ENCODE measurements at regions of chr10 and their contacts with region 1.

Region 1: DNA sequence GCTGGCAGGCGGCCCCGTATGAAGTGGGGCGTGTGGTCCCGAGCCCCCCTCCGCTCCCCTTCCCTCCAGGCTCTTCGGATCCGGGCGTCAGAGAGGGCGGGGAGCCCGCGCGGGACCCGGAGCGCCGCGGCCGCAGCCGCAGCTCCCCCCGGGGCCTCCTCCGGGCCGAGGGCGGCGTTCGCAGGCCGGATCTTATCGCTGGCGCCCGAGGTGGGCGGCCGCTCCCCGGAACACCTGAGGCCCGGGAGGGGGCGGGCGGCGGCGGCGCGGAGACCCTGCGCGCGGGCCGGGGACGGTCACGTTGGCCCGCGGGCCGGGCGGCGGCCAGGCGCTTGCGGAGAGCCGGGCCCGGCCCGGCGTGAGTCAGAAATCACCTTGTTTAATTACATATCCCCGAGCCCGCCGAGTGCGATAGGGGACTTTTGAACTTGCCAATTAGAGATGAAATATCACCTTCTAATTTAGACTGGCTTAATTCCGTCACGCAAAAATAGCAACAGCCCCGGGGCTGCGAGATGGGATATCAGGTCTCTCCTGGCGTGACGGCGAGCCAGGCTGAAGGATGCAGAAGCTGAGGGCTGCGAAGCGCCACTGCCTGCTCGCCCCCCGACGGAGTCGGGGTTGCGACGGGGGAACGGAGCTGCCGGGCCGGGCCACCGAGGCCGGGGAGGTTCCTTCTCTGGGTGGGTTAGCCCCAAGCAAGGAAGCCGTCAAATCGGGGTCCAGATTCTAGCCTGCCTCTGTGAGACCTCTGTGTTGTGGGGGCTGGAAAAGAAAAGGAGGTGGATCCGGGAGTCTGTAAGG is 43.4 kb downstream of the LDB3 start:
- DNase-seq: peak; percentile 57
- H3K27ac ChIP-seq: peak overlapping the region; percentile 87
- CTCF ChIP-seq: no peak

Region 2: GRCh38 chr10:86614853-86615252 is 96.9 kb before region 1 on chr10:
- CTCF ChIA-PET with region 1: no interaction called
- POLR2A ChIA-PET with region 1: no interaction called
- DNase-seq: no peak
- H3K27ac ChIP-seq: no peak overlapping the region
- CTCF ChIP-seq: no peak

Region 3: GRCh38 chr10:86792461-86793167 is 80.9 kb after region 1 on chr10:
- CTCF ChIA-PET with region 1: no interaction called
- POLR2A ChIA-PET with region 1: interaction called, 17 read pairs
- DNase-seq: no peak
- H3K27ac ChIP-seq: no peak overlapping the region
- CTCF ChIP-seq: no peak

Measured in RWPE1 (cell line).